ENCODE measurements at regions of chr22 and their contacts with region 1.

Region 1: DNA sequence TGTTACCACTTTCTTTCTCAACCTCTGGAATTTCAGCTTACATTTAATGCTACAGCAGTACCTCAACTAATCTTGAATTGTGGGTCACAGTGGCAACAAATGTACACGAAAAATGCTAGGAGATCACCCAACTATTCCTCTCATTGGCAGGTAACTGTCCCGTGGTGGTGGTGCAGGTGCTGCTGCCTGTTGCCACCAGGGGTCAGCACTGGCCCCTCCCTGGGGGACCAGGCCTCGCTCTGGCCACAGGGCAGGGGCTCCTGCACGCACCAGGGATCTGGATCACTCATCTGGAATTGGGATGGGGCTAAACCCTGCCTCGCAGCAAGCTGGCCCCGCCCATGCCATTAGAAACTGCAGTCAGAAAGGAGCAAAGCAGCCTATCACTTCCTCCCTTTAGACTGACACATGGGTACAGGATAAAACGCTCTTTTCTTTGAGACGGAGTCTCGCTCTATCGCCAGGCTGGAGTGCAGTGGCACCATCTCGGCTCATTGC is 6.9 kb upstream of the POLDIP3 start:
- DNase-seq: peak; percentile 69 to 78
- ATAC-seq: peak; percentile 45 to 74 (median 70)
- H3K4me3 ChIP-seq: no peak overlapping the region
- H3K27ac ChIP-seq: peak overlapping the region in 5 of 10 donors; percentile 3 to 44 (median 35)
- H3K4me1 ChIP-seq: peaks cover 5 to 45% (median 23%) of the 10 kb centered on the region in 9 donors
- H3K27me3 ChIP-seq: no peaks in the 10 kb centered on the region
- CTCF ChIP-seq: peak; percentile 81 to 96 (median 92)

Region 2: GRCh38 chr22:42294034-42294985 is 327.2 kb before region 1 on chr22:
- intact Hi-C with region 1: no loop called
- DNase-seq: peak; percentile 60 to 65
- ATAC-seq: peak; percentile 58 to 81 (median 70)
- H3K4me3 ChIP-seq: no peak overlapping the region
- H3K27ac ChIP-seq: no peak overlapping the region
- H3K4me1 ChIP-seq: peaks cover 0 to 15% (median 3%) of the 10 kb centered on the region in 9 donors
- H3K27me3 ChIP-seq: no peaks in the 10 kb centered on the region
- CTCF ChIP-seq: no peak

Region 3: DNA sequence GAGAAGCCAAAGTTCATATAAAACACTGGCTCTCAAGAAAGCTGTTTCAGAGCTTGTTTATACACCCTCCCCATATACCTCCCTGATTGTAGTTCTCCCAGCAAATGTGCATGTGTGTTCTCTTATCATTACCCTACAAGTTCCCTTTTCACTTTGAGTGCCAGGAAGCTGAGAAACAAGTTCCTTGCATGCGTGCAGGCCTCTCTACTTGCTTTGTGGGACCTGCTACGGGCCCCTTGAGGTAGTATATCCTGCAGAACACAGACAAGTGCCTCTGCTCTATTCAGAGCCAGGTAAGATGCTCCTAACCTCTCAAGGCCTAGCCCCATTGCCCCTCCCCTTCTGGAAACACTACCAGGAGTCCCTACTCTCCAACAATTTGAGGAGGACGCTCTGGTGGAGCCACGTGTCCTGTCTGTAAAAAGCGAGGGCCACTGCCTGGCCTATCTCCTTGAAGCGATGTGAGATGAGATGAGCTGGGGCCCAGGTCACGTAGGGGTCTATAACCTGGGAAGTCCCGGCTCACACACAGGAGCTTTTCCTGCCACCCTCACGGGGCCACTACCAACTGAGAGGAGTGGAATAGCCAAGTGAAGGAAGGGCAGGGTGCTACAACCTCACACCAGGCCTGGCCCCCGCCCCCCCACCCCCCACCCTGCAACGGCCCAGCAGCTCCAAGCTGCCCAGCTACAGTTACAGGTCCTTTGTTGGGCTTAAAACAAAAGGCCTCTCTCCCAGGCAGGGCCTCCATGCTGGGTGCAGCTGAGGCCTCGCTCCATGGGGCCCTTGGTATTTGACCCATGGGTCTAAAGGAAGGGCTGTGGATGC is 21.5 kb after region 1 on chr22:
- intact Hi-C with region 1: loop called in 2 of 10 experiments (anchors 2 kb)
- DNase-seq: no peak
- ATAC-seq: no peak
- H3K4me3 ChIP-seq: no peak overlapping the region
- H3K27ac ChIP-seq: peak overlapping the region; percentile 77 to 99 (median 96)
- H3K4me1 ChIP-seq: peaks cover 45 to 91% (median 74%) of the 10 kb centered on the region in 9 donors
- H3K27me3 ChIP-seq: no peaks in the 10 kb centered on the region
- CTCF ChIP-seq: no peak

Region 4: DNA sequence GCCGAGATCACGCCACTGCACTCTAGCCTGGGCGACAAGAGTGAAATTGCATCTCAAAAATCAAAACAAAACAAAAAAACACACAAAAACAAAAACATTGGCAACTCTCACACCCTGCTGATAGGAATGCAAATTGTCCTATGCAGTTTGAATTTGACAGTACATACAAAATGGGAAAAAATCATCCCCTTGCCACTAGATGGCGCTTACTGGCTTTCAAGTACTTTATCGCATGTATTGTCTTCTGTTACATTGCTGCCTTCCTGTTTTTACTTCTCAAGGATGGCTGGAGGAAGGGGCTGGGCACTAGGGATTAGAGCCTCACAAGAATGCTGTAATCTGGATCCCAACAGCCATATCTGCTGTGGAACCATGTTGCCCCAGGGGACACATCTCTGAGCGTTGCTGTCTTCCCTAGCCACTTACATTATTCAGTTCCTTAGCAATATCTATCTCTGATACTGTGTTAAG is 158.6 kb after region 1 on chr22:
- intact Hi-C with region 1: no loop called
- DNase-seq: peak in 1 of 2 donors; percentile 88
- ATAC-seq: peak; percentile 63 to 91 (median 87)
- H3K4me3 ChIP-seq: no peak overlapping the region
- H3K27ac ChIP-seq: peak overlapping the region in 4 of 10 donors; percentile 8 to 35 (median 29)
- H3K4me1 ChIP-seq: peaks cover 0 to 9% (median 4%) of the 10 kb centered on the region in 9 donors
- H3K27me3 ChIP-seq: no peaks in the 10 kb centered on the region
- CTCF ChIP-seq: peak; percentile 78 to 92 (median 84)

Region 5: GRCh38 chr22:42814215-42814614 is 192.7 kb after region 1 on chr22:
- intact Hi-C with region 1: loop called in 4 of 10 experiments (anchors 2 to 10 kb)
- DNase-seq: no peak
- ATAC-seq: no peak
- H3K4me3 ChIP-seq: no peak overlapping the region
- H3K27ac ChIP-seq: peak overlapping the region in 1 of 10 donors; percentile 11
- H3K4me1 ChIP-seq: peaks cover 0 to 17% (median 0%) of the 10 kb centered on the region in 9 donors
- H3K27me3 ChIP-seq: no peaks in the 10 kb centered on the region
- CTCF ChIP-seq: no peak

Region 6: GRCh38 chr22:42820066-42820763 is 198.7 kb after region 1 on chr22:
- intact Hi-C with region 1: loop called in 4 of 10 experiments (anchors 2 to 10 kb)
- DNase-seq: no peak
- ATAC-seq: peak in 4 of 8 donors; percentile 40 to 74 (median 64)
- H3K4me3 ChIP-seq: no peak overlapping the region
- H3K27ac ChIP-seq: peak overlapping the region in 5 of 10 donors; percentile 6 to 49 (median 21)
- H3K4me1 ChIP-seq: peaks cover 0 to 16% (median 9%) of the 10 kb centered on the region in 9 donors
- H3K27me3 ChIP-seq: no peaks in the 10 kb centered on the region
- CTCF ChIP-seq: peak in 8 of 9 donors; percentile 54 to 80 (median 69)